A673 (cell line): ENCODE measurements at regions of chr2 and their contacts with region 1.

Region 1: GRCh38 chr2:85189606-85190270 is 56.5 kb downstream of the TCF7L1 start:
- DNase-seq: no peak
- H3K4me3 ChIP-seq: no peak overlapping the region
- H3K27ac ChIP-seq: no peak overlapping the region
- H3K4me1 ChIP-seq: peaks cover 15% of the 10 kb centered on the region
- H3K27me3 ChIP-seq: no peaks in the 10 kb centered on the region
- CTCF ChIP-seq: no peak

Region 2: GRCh38 chr2:84958135-84959044 is 231.3 kb before region 1 on chr2:
- CTCF ChIA-PET with region 1: no interaction called
- POLR2A ChIA-PET with region 1: no interaction called
- intact Hi-C with region 1: no loop called
- DNase-seq: no peak
- H3K4me3 ChIP-seq: no peak overlapping the region
- H3K27ac ChIP-seq: no peak overlapping the region
- H3K4me1 ChIP-seq: no peaks in the 10 kb centered on the region
- H3K27me3 ChIP-seq: no peaks in the 10 kb centered on the region
- CTCF ChIP-seq: no peak

Region 3: GRCh38 chr2:85209887-85210286 is 20.1 kb after region 1 on chr2:
- CTCF ChIA-PET with region 1: no interaction called
- POLR2A ChIA-PET with region 1: no interaction called
- intact Hi-C with region 1: loop called (anchors 2 kb)
- DNase-seq: no peak
- H3K4me3 ChIP-seq: no peak overlapping the region
- H3K27ac ChIP-seq: no peak overlapping the region
- H3K4me1 ChIP-seq: peaks cover 23% of the 10 kb centered on the region
- H3K27me3 ChIP-seq: no peaks in the 10 kb centered on the region
- CTCF ChIP-seq: no peak